Left lung (tissue), 14 donors: ENCODE measurements at regions of chr15 and their contacts with region 1.

Region 1: DNA sequence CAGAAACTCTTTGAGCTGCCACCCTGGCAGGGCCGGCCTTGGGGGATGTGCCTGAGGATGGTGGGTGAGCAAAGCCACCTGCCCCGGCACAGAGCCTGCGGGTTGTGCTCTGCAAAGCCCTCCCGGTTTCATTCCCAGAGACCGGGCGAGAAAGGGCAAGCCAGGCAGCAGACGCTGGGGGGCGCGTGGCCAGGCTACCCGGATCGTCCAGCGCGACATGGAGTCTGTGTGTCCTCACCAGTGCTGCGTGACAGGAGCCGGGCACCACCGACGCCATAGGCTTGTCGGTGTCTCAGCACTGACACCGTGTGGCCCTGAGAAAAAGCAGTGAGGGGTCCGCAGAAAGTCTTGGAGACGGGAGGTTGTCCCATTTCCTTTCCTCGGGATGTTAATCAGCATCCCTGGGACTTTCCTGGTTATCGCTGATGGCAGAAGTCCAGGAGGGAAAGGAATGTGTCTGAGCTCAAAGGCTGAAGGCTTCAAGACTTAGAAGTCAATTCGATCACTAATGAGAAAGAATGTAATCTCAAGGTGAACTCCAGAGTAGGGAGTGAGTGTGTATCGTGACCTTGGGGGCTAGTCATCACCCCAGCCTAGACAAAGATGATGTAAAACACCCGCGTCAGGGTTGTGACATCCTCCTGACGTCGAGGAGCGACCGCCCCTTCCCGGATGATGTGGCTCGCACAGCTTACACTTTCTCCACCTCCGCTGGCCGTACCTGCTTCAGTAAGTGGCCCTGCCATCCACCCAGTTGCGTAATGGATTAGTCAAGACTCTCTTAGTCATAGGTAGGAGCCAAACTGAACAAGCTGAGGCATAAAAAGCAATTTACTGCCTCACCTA is 36.3 kb upstream of the PLA2G4E start:
- DNase-seq: peak; percentile 56 to 89 (median 85)
- ATAC-seq: peak; percentile 84
- H3K4me3 ChIP-seq: peak overlapping the region; percentile 6 to 19
- H3K27ac ChIP-seq: peak overlapping the region; percentile 74 to 87
- H3K4me1 ChIP-seq: peaks cover 5 to 28% of the 10 kb centered on the region in 2 donors
- H3K27me3 ChIP-seq: peaks cover 0 to 7% of the 10 kb centered on the region in 2 donors
- CTCF ChIP-seq: peak; percentile 41 to 46

Region 2: GRCh38 chr15:41978534-41978933 is 78.6 kb before region 1 on chr15:
- intact Hi-C with region 1: no loop called
- DNase-seq: no peak
- ATAC-seq: no peak
- H3K4me3 ChIP-seq: no peak overlapping the region
- H3K27ac ChIP-seq: no peak overlapping the region
- H3K4me1 ChIP-seq: peaks cover 0 to 11% of the 10 kb centered on the region in 2 donors
- H3K27me3 ChIP-seq: no peaks in the 10 kb centered on the region
- CTCF ChIP-seq: no peak

Region 3: GRCh38 chr15:41989259-41989933 is 67.8 kb before region 1 on chr15:
- intact Hi-C with region 1: loop called in 1 of 2 experiments (anchors 5 kb)
- DNase-seq: peak; percentile 71 to 95 (median 83)
- ATAC-seq: peak; percentile 94
- H3K4me3 ChIP-seq: no peak overlapping the region
- H3K27ac ChIP-seq: no peak overlapping the region
- H3K4me1 ChIP-seq: peaks cover 0 to 10% of the 10 kb centered on the region in 2 donors
- H3K27me3 ChIP-seq: no peaks in the 10 kb centered on the region
- CTCF ChIP-seq: peak; percentile 98 to 99